ENCODE measurements at regions of chr4 and their contacts with region 1.

Region 1: DNA sequence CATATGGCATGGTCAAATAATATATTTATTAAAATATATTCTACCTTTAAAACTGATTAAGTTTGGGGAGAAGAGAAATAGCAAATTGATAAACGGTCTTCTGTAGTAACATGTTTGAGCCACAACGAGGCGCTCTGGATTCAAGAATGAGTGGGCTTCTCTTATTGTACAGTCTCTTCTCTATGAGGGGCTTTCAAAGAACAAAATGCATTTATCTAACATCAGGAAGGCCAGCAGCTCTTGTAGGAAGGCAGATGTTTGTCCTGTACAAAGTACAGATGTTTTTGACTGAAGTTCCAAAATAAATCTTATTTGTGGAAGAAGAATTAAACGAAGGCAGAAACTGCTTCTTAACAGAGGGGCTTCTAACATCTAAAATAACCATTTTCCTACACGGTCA is 153.6 kb downstream of the RASL11B start:
- DNase-seq: peak in 5 of 7 donors; percentile 36 to 71 (median 56)
- H3K4me3 ChIP-seq: no peak overlapping the region
- H3K27ac ChIP-seq: peak overlapping the region in 3 of 5 donors; percentile 10 to 33 (median 23)
- H3K4me1 ChIP-seq: peaks cover 55 to 80% of the 10 kb centered on the region in 2 donors
- H3K27me3 ChIP-seq: no peaks in the 10 kb centered on the region
- CTCF ChIP-seq: peak; percentile 65 to 83 (median 71)
- POLR2A ChIP-seq: no peak

Region 2: DNA sequence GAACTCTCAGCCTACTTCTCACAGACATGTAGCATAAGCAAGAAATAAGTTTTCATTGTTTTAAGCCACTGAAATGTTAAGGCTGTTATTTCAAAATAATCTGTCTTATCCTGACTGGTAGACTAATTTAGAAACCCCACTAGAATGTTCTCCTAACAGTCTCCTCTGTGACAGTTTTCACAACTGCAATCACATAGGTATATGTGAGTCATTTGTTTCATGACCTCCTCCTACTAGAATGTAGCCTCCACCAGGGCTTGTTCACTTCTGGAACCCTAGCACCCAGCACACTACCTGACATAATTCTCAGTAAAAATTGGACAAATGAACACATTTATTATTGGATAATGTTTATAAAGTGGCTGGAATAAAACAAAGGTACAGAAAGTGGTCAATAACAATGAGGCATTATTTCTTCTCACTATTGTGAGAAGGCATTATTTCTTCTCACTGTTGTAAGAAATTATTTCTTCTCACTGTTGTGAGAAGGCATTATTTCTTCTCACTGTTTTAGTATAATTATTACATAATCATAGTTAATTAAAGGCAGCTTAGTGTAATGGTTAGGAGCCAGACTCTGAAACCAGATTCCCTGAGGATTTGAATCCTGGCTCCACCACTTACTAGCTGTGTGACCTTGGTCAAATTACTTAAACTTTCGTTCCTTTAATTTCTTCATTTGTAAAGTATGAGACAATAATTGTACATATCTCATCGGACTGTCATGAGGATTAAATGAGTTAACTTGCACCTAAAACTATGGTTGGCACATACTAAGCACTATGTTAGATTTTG is 97.9 kb after region 1 on chr4:
- intact Hi-C with region 1: no loop called
- DNase-seq: no peak
- H3K4me3 ChIP-seq: no peak overlapping the region
- H3K27ac ChIP-seq: no peak overlapping the region
- H3K4me1 ChIP-seq: no peaks in the 10 kb centered on the region
- H3K27me3 ChIP-seq: no peaks in the 10 kb centered on the region
- CTCF ChIP-seq: no peak
- POLR2A ChIP-seq: no peak

Region 3: DNA sequence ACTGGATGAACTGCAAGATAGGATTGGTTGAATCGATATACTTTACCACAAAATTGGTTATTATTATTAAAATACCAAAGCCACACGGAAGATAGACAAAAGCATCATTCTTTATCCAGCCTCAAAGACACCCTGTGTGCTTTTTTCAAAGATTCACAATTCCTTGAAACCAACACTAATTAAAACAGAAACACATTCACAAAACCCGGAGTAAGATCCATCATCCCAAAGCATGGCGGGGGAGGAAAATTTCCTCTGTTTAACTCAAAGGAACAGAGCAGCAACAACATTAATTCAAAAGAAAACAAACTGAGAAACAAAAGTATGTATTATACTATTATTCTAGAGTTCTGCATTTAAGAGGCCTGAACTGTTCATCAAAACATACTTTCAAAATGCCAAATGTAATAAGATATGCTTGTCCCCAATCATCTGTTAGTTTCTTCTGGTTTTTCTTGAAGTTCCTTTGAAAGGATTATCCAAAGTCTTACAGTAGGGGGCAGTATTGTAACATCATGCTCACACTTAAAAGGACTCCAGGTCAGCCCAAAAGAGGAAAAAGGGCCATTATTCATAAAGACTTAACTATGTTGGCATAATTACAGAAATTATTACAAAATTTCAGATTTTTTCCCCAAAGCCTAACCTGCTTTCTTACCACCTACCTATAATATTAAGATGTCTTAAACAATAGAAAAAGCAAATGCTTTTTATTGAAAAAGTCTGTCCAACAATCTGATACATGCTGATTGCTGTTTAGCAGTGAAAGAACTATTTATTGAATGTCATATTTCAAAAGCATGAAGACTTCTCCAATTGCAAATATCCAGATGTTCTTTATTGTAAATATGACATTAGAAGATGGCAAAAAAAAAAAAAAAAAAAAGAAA is 181.4 kb after region 1 on chr4:
- intact Hi-C with region 1: loop called in 1 of 2 experiments (anchors 10 kb)
- DNase-seq: no peak
- H3K4me3 ChIP-seq: no peak overlapping the region
- H3K27ac ChIP-seq: no peak overlapping the region
- H3K4me1 ChIP-seq: peaks cover 5 to 8% of the 10 kb centered on the region in 2 donors
- H3K27me3 ChIP-seq: no peaks in the 10 kb centered on the region
- CTCF ChIP-seq: peak; percentile 70 to 87 (median 80)
- POLR2A ChIP-seq: no peak

Region 4: DNA sequence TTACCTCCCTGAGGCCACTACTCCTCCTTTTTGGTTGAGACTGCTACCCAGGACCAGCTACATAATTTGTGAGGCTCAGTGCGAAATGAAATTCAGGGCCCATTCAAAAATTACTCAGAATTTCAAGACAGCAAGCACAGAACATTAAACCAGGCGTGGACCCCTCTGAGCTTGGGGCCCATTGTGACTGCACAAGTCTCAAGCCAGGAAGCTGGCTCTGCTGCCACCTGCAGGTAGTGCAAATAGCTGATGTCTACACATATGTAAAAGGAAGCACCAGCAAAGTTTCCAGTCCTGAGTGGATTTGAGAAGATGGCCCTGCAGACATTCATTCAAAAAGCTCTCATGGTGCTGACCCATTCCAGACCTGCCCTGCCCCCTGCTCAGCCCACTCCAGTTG is 789.0 kb after region 1 on chr4:
- intact Hi-C with region 1: loop called in 1 of 2 experiments (anchors 10 kb)
- DNase-seq: peak in 6 of 7 donors; percentile 39 to 68 (median 54)
- H3K4me3 ChIP-seq: no peak overlapping the region
- H3K27ac ChIP-seq: no peak overlapping the region
- H3K4me1 ChIP-seq: no peaks in the 10 kb centered on the region
- H3K27me3 ChIP-seq: no peaks in the 10 kb centered on the region
- CTCF ChIP-seq: peak; percentile 15 to 49 (median 36)
- POLR2A ChIP-seq: no peak